ENCODE measurements at regions of chrX and their contacts with region 1.

Region 1: DNA sequence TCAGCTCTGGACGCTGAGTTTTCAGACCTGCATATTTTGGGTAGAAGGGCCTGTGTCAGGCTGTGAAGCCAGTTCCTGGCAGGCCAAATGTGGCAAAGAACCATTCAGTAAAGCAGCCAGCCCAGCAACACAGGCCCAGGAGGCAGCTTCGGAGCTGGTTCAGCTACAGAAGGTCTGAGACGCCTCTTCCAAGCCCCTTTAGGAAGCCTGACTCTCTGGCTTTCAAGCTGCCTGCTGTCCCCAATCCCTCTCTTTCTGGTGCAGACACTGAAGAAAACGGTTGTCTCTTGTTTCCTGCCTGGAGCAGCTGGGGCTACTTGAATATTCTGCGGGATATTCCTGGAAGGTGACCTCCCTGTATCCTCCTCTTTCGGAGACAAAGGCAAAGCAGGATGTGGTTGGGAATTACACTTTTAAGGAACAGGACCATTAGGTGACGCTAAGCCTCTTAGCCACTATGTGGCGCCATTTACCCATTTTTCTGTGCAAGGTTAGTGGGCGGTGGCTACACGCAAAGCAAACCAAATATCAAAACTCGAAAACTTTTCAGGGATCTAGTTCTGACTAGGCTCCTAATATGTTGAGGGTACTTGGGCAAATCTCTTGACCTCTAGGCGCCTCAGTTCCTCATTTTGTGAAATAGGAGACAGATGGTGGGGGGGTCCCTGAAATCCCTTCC is 47.2 kb upstream of the LAS1L start:
- DNase-seq: peak in 8 of 9 experiments; percentile 31 to 76 (median 60)
- ATAC-seq: peak; percentile 57
- H3K4me3 ChIP-seq: no peak overlapping the region
- H3K4me3 Mint-ChIP-seq: no peak overlapping the region
- H3K27ac ChIP-seq: no peak overlapping the region
- H3K27ac Mint-ChIP-seq: no peak overlapping the region
- H3K4me1 ChIP-seq: no peaks in the 10 kb centered on the region
- H3K4me1 Mint-ChIP-seq: no peaks in the 10 kb centered on the region
- H3K27me3 ChIP-seq: no peaks in the 10 kb centered on the region
- H3K27me3 Mint-ChIP-seq: no peaks in the 10 kb centered on the region
- CTCF ChIP-seq: peak; percentile 67

Region 2: DNA sequence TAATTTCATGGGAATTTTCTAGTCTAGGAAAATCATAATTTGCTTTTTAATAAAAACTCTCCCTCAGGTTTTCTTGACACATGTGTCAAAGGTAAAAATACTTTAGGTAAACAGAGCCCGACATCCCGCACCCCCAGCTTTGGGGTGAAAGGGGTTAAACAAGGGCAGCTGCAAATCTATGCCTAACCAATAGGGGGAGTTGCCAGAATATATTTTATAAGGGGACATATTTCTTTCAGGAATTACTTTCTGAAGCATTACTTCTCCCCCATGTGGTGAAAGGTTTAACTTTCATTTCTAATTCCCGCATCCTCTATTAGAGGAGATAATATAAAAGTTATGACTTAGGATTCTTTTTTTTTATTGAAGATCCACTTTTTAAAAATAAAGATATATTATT is 528.3 kb after region 1 on chrX:
- CTCF ChIA-PET with region 1: interaction called, 3 read pairs
- POLR2A ChIA-PET with region 1: no interaction called
- intact Hi-C with region 1: loop called (anchors 1 to 5 kb)
- DNase-seq: peak in 2 of 9 experiments; percentile 32 to 50
- ATAC-seq: peak; percentile 34
- H3K4me3 ChIP-seq: no peak overlapping the region
- H3K4me3 Mint-ChIP-seq: no peak overlapping the region
- H3K27ac ChIP-seq: no peak overlapping the region
- H3K27ac Mint-ChIP-seq: no peak overlapping the region
- H3K4me1 ChIP-seq: no peaks in the 10 kb centered on the region
- H3K4me1 Mint-ChIP-seq: peaks cover 2% of the 10 kb centered on the region
- H3K27me3 ChIP-seq: no peaks in the 10 kb centered on the region
- H3K27me3 Mint-ChIP-seq: no peaks in the 10 kb centered on the region
- CTCF ChIP-seq: peak; percentile 33

Region 3: DNA sequence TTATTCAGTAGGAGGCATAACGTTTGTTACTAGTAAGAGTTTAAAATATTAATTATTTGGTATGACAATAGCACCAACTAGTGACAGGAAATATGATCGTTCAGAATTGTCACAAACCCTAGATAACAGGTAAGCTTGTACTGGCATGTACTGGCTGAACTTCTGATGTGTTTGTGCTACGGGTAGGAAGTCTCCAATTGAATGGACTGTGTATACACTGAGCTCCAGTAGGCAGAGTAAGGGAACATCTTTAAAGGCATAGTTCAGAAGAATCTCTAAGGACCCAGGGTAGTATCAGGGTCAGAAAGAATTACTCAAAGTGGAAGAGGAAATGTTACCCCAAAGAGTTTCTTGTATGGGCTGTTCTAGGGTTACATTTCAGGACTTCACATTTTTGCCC is 826.7 kb after region 1 on chrX:
- CTCF ChIA-PET with region 1: interaction called, 5 read pairs
- POLR2A ChIA-PET with region 1: no interaction called
- intact Hi-C with region 1: loop called in 1 of 2 experiments (anchors 2 kb)
- DNase-seq: peak in 2 of 9 experiments; percentile 7 to 32
- ATAC-seq: no peak
- H3K4me3 ChIP-seq: no peak overlapping the region
- H3K4me3 Mint-ChIP-seq: no peak overlapping the region
- H3K27ac ChIP-seq: no peak overlapping the region
- H3K27ac Mint-ChIP-seq: no peak overlapping the region
- H3K4me1 ChIP-seq: no peaks in the 10 kb centered on the region
- H3K4me1 Mint-ChIP-seq: no peaks in the 10 kb centered on the region
- H3K27me3 ChIP-seq: no peaks in the 10 kb centered on the region
- H3K27me3 Mint-ChIP-seq: no peaks in the 10 kb centered on the region
- CTCF ChIP-seq: peak; percentile 19

Region 4: GRCh38 chrX:66728818-66729271 is 1147.0 kb after region 1 on chrX:
- CTCF ChIA-PET with region 1: interaction called, 7 read pairs
- POLR2A ChIA-PET with region 1: no interaction called
- intact Hi-C with region 1: loop called in 1 of 2 experiments (anchors 2 kb)
- DNase-seq: peak; percentile 16 to 70 (median 42)
- ATAC-seq: peak; percentile 85
- H3K4me3 ChIP-seq: peak overlapping the region; percentile 48 to 91
- H3K4me3 Mint-ChIP-seq: peak overlapping the region; percentile 92
- H3K27ac ChIP-seq: peak overlapping the region; percentile 50 to 86
- H3K27ac Mint-ChIP-seq: peak overlapping the region; percentile 98
- H3K4me1 ChIP-seq: no peaks in the 10 kb centered on the region
- H3K4me1 Mint-ChIP-seq: peaks cover 2% of the 10 kb centered on the region
- H3K27me3 ChIP-seq: no peaks in the 10 kb centered on the region
- H3K27me3 Mint-ChIP-seq: no peaks in the 10 kb centered on the region
- CTCF ChIP-seq: peak; percentile 39